ENCODE measurements at regions of chr15 and their contacts with region 1.

Region 1: DNA sequence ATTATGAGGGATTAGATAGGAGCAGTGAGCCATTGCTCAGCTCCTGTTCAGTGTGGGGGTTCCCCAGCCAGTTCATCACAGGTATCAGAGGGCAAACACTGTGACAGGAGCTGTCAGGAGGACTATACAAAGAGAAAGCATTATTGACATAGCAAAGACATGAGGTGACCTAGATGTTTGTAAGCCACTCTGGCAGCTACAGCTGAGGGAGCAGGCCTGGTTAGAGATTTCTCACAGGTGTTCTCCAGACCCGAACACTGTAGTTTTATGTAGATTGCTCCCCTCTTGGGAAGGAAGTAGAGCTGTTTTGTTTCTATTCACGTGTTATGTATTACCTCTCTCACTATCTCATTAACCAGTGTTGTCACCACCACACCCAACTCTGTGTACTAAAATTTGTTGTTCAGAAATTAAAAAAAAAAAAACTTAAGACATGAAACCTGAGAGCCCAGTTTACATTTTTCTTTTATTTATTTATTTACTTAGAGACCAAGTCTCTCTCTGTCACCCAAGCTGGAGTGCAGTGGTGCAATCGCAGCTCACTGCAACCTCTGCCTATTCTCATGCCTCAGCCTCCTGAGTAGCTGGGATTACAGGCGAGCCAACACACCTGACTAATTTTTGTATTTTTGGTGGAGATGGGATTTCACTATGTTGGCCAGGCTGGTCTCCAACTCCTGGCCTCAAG is 123.7 kb downstream of the RBPMS2 start:
- DNase-seq: no peak

Region 2: DNA sequence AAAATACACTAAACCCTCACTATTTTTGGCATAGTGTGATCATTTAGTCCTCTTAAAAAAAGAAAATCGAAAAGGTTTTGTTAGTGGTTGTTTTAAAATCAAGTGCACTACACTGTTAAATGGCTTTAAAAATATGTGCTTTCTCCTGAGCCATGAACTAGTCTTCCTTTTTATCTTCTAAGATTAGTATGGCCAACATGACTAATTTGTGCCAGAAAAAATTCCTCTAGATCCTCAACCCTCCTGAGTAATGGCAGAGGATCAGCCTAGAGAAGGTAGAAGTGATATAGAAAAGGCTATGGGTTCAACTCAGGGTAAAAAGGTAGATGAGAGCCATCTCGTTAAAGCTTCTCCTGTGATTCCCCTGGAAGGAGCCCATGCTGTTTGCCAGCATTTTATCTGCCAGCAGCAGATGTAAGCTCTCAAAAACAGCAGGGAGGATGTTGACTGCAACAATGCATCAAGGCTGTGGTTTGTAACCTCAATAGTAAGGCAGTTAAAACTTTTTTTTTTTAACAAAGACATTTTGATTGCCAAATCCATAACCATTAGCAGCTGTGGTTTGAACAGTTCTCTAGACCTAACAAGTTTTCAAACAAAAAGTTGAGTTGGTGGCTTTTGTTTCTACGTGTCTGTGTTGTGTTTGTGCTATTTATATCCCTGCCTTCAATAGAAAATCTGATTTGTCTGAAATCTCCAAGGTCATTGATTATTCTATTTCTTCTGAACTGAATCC is 221.5 kb before region 1 on chr15:
- intact Hi-C with region 1: loop called (anchors 5 kb)
- DNase-seq: no peak